ENCODE measurements at regions of chr16 and their contacts with region 1.

Region 1: DNA sequence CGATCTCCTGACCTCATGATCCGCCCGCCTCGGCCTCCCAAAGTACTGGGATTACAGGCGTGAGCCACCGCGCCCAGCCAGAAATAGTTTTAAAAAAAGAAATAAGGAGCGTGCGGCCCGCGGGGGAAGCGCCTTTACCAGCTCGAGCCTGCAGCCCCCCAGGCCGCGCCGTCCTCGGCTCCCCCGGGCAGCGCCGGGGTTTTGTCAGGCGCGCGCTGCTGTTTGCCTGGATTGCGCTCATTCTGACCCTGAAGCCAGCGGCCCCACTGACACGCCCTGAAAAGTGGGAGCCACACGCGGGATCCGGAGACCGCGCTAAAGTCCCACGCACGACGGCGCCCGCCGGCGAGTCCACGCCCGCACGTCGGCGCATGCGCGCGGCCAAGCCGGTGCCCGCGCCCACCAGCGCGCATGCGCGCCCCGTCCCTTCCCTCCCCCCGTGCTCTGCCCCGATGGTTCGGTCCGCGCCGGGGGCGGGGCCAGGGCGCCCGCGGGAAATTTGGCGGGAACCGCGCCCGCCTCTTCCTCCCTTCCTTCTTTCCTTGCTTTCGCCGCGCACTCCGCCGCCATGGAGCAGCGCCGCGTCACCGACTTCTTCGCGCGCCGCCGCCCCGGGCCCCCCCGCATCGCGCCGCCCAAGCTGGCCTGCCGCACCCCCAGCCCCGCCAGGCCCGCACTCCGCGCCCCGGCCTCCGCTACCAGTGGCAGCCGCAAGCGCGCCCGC is at the start of gene CDT1:
- DNase-seq: peak; percentile 96

Region 2: DNA sequence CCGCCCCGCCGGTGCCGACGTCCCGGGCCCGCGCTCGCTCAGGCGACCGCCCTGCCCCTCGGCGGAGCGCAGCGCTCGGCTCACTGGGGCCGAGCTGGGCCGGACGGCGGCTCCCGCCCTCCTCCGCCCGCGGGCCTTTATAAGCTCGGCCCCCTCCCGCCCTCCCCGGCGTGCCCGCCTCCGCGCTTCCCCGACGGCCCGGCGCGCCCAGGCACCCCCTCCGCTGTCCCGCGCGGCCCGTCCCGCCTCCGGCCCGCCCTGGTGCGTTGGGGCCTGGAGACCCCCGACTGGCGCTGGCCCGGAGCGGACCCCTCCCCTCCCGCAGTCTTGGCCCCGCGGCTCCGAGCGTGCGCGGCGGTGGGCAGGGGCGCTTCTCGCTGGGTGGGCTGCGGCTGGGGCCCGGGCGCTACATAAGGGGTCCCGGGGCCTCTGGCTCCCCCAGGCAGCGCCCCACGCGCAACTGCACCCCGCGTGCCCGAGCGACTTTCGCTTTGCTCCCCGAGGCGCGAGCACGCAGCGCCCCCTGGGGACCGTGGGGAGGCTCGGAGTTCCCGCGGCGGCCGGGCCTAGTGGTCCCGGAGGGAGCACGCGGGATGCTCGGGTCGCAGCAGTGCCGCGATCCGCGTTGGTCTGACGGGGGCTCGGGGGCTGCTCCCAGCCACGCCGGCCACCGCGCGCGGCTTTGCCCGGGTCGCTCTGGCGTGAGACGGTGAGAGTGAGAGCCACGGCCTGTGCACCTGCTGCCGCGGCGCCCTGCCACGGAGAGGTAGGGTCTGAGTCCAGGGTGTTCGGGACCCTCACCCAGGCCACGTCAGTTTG is 18.1 kb before region 1 on chr16 and contains the start of gene PIEZO1:
- CTCF ChIA-PET with region 1: interaction called, 4 read pairs
- POLR2A ChIA-PET with region 1: interaction called, 22 read pairs
- DNase-seq: peak; percentile 69